ENCODE measurements at regions of chr19 and their contacts with region 1.

Region 1: GRCh38 chr19:4791170-4792018 is at the start of gene FEM1A:
- DNase-seq: peak; percentile 100
- ATAC-seq: peak; percentile 98
- H3K4me3 ChIP-seq: peak within 1 kb of the TSS; percentile 67 to 94 (median 83)
- H3K27ac ChIP-seq: peak within 1 kb of the TSS; percentile 79
- H3K4me1 ChIP-seq: peaks cover 51% of the 10 kb centered on the region
- H3K27me3 ChIP-seq: no peaks in the 10 kb centered on the region
- CTCF ChIP-seq: peak; percentile 96
- EP300 ChIP-seq: peak in 1 of 2 experiments; percentile 32; a peak in 1 of 4 replicates
- POLR2A ChIP-seq: peak; percentile 80 to 81
- RAD21 ChIP-seq: peak; percentile 89
- total RNA-seq, gene FEM1A: 10.8 and 11.6 TPM in 2 replicates

Region 2: GRCh38 chr19:4669723-4670480 is 121.5 kb before region 1 on chr19 and contains the start of gene MYDGF:
- CTCF ChIA-PET with region 1: no interaction called
- POLR2A ChIA-PET with region 1: interaction called, 10 read pairs
- in situ Hi-C with region 1: no loop called
- intact Hi-C with region 1: no loop called
- DNase-seq: peak; percentile 70
- ATAC-seq: peak; percentile 91
- H3K4me3 ChIP-seq: peak within 1 kb of the TSS; percentile 76 to 97 (median 80)
- H3K27ac ChIP-seq: peak within 1 kb of the TSS; percentile 97
- H3K4me1 ChIP-seq: peaks cover 28% of the 10 kb centered on the region
- H3K27me3 ChIP-seq: no peaks in the 10 kb centered on the region; a peak in 1 of 5 replicates
- CTCF ChIP-seq: no peak
- EP300 ChIP-seq: no peak
- POLR2A ChIP-seq: peak; percentile 86 to 89
- RAD21 ChIP-seq: no peak; the same call in 1 of the 2 replicates
- total RNA-seq, gene MYDGF: 51.2 and 116 TPM in 2 replicates

Region 3: DNA sequence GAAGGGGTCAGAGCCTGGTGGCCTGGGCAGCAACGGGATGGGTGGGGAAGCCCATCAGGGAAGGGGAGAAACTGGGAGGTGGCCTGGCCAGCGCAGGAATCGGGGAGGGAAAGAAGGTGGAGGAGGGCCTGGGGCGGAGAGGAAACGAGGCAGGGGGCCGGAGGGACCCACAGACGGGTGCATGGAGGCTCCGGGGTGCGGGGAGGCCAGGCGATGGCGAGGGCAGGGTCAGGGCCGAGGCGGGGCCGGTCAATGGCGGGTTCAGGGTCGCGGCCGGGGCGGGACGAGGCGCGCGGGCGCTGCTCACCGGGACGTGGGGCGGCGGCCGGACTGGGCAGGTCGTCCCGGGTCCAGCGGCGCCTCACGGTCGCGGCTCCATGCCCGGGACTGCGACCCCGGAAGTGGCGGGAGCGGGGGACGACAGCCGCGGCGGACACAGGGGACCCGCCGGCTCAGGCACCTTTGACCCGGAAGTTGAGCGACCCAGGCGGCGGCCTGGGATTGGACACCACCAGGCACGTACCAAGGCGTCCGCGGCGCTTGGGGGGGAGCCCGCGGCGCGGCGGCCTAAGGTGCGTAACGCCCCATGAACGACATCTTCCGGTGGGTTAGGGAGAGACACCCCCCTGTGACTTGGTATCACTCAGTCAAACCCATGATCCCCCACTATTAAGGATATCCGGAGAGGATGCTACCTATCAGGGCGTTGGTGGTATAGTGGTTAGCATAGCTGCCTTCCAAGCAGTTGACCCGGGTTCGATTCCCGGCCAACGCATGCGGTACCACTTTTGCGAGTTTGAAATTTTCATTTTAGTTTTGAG is 67.8 kb before region 1 on chr19 and contains the start of gene DPP9:
- CTCF ChIA-PET with region 1: interaction called, 5 read pairs
- POLR2A ChIA-PET with region 1: interaction called, 15 read pairs
- in situ Hi-C with region 1: no loop called
- intact Hi-C with region 1: loop called (anchors 2 kb)
- DNase-seq: peak; percentile 97
- ATAC-seq: peak; percentile 91
- H3K4me3 ChIP-seq: peak within 1 kb of the TSS; percentile 78 to 100 (median 99)
- H3K27ac ChIP-seq: peak within 1 kb of the TSS; percentile 57
- H3K4me1 ChIP-seq: peaks cover 48% of the 10 kb centered on the region
- H3K27me3 ChIP-seq: no peaks in the 10 kb centered on the region; a peak in 1 of 5 replicates
- CTCF ChIP-seq: peak; percentile 92
- EP300 ChIP-seq: peak in 1 of 2 experiments; percentile 27; a peak in 1 of 4 replicates
- POLR2A ChIP-seq: peak; percentile 21 to 65; a peak in 3 of 4 replicates
- RAD21 ChIP-seq: peak; percentile 76
- total RNA-seq, gene DPP9: 25.8 and 26.6 TPM in 2 replicates

Region 4: DNA sequence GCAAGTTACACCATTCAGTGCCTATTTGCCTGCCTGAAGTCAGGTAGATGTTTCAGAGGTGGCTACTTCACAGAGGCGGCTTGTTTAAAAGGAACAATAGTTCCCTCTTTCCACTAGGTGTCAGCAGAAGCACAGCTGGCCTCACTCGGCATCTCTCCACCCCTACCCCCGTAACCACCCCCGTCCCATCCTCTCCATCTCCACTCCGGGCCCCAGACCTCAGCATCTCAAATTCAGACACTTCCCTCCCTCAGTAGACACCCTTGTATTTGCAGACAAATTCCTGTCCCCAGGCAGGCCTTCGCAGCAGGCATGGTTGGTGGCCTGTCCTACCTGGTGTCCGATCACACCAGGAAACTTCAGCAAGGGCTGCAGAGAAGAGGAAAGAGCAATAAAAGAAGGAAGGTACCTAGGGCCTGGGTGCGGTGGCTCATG is 58.7 kb before region 1 on chr19:
- CTCF ChIA-PET with region 1: interaction called, 68 read pairs
- POLR2A ChIA-PET with region 1: interaction called, 12 read pairs
- in situ Hi-C with region 1: loop called (anchors 5 kb)
- intact Hi-C with region 1: loop called (anchors 1 kb)
- DNase-seq: peak; percentile 63
- ATAC-seq: peak; percentile 76
- H3K4me3 ChIP-seq: no peak overlapping the region
- H3K27ac ChIP-seq: no peak overlapping the region
- H3K4me1 ChIP-seq: peaks cover 32% of the 10 kb centered on the region
- H3K27me3 ChIP-seq: peaks cover 0 to 6% of the 10 kb centered on the region in 2 experiments; a peak in 1 of 5 replicates
- CTCF ChIP-seq: peak; percentile 89
- EP300 ChIP-seq: no peak
- POLR2A ChIP-seq: no peak
- RAD21 ChIP-seq: peak; percentile 82